ENCODE measurements at regions of chr3 and their contacts with region 1.

Region 1: DNA sequence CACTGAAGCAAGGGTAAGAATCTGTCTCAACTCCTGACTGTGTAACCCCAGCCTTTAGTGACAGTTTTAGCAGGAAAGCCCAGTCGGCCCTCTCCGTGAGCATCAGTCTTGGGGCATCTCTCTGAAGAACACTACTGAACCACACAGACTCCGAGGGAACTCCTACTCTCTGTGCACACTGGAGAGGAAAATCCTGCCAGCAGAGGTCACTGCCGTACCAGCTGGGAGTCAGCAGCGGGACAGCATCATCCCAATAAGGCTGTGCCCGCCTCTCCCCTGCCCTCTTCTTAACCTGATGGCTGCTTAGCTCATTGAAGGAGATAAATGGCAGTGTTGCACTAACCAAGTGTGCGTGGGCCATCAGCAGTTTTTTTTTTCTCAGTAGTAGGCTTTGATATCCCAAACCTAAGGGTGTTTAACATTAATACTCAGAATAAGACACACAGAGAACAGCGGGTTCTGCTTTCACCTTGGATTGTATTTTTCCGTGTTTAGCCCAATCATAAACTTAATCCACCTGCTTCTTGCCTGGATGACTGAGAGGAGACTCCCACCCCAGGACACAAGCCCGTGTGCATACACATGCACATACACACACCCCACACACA is 26.6 kb upstream of the RASA2 start:
- DNase-seq: peak; percentile 84 to 97 (median 93)

Region 2: GRCh38 chr3:141487521-141488252 is 27.5 kb after region 1 on chr3:
- intact Hi-C with region 1: loop called (anchors 2 kb)
- DNase-seq: peak; percentile 23 to 70 (median 50)

Region 3: GRCh38 chr3:141561426-141562034 is 101.3 kb after region 1 on chr3:
- intact Hi-C with region 1: loop called (anchors 2 kb)
- DNase-seq: peak in 15 of 42 donors; percentile 9 to 74 (median 39)

Measured in head of caudate nucleus (tissue), 42 donors.